Endothelial cell of umbilical vein (primary cell): ENCODE measurements at regions of chr17 and their contacts with region 1.

Region 1: GRCh38 chr17:29273924-29274323 is 20.0 kb downstream of the NUFIP2 start:
- DNase-seq: no peak
- H3K4me3 ChIP-seq: no peak overlapping the region
- H3K27ac ChIP-seq: no peak overlapping the region
- H3K4me1 ChIP-seq: no peaks in the 10 kb centered on the region
- H3K27me3 ChIP-seq: no peaks in the 10 kb centered on the region
- CTCF ChIP-seq: no peak
- POLR2A ChIP-seq: no peak

Region 2: GRCh38 chr17:29111816-29112499 is 162.0 kb before region 1 on chr17:
- CTCF ChIA-PET with region 1: no interaction called
- POLR2A ChIA-PET with region 1: no interaction called
- dilution Hi-C with region 1: no loop called
- intact Hi-C with region 1: no loop called
- DNase-seq: peak; percentile 62
- H3K4me3 ChIP-seq: no peak overlapping the region
- H3K27ac ChIP-seq: no peak overlapping the region
- H3K4me1 ChIP-seq: peaks cover 3% of the 10 kb centered on the region
- H3K27me3 ChIP-seq: no peaks in the 10 kb centered on the region
- CTCF ChIP-seq: peak; percentile 85 to 98
- POLR2A ChIP-seq: no peak

Region 3: GRCh38 chr17:29257756-29258155 is 16.2 kb before region 1 on chr17:
- CTCF ChIA-PET with region 1: interaction called, 11 read pairs
- POLR2A ChIA-PET with region 1: no interaction called
- dilution Hi-C with region 1: no loop called
- intact Hi-C with region 1: no loop called
- DNase-seq: no peak
- H3K4me3 ChIP-seq: no peak overlapping the region
- H3K27ac ChIP-seq: no peak overlapping the region
- H3K4me1 ChIP-seq: peaks cover 29% of the 10 kb centered on the region
- H3K27me3 ChIP-seq: no peaks in the 10 kb centered on the region
- CTCF ChIP-seq: no peak
- POLR2A ChIP-seq: no peak